ENCODE measurements at regions of chr14 and their contacts with region 1.

Region 1: GRCh38 chr14:52824507-52824906 is 33.1 kb upstream of the GNPNAT1 start:
- DNase-seq: no peak
- ATAC-seq: no peak
- H3K4me3 ChIP-seq: no peak overlapping the region
- H3K4me3 Mint-ChIP-seq: no peak overlapping the region
- H3K27ac ChIP-seq: no peak overlapping the region
- H3K27ac Mint-ChIP-seq: no peak overlapping the region
- H3K4me1 ChIP-seq: no peaks in the 10 kb centered on the region
- H3K4me1 Mint-ChIP-seq: peaks cover 0 to 6% (median 0%) of the 10 kb centered on the region in 7 donors
- H3K27me3 ChIP-seq: no peaks in the 10 kb centered on the region
- H3K27me3 Mint-ChIP-seq: peaks cover 0 to 13% (median 3%) of the 10 kb centered on the region in 5 donors

Region 2: DNA sequence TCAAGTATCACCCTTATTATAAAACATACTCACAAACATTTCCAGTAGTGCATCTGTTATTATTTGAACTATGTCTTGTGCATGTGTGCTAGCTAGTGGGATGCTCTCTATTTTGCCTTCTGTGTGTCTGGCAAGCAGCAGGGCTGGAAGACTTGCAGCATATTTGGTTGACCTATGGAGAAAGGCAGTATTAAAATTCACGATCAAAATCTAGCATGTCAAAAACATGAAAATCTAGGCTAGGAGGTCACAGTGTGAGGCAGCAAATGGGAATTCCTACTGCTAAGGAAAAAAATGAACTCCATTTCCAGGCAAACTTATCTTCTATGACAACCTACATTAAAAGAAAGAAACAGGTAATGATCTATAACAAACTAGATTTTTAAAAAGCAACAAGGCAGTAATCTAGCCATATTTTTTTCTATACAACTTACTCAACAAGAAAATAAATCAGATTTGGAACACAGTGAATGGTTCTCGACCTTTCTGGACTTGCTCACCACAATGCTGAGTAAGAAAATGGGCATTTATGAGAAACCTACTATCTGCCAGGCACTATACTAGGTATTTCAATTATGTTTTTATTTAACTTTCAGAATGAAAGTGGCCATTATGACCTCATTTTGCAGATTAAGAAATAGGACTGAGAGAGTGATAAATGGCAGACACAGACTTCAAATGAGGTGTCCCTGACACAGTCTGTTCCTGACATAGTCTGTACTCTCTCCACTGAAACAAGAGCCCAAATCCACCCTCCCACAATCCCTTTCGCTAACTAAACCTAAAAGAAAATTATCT is 369.0 kb before region 1 on chr14:
- CTCF ChIA-PET with region 1: no interaction called
- POLR2A ChIA-PET with region 1: no interaction called
- intact Hi-C with region 1: no loop called
- DNase-seq: no peak
- ATAC-seq: no peak
- H3K4me3 ChIP-seq: no peak overlapping the region
- H3K4me3 Mint-ChIP-seq: no peak overlapping the region
- H3K27ac ChIP-seq: no peak overlapping the region
- H3K27ac Mint-ChIP-seq: peak overlapping the region in 1 of 9 donors; percentile 86
- H3K4me1 ChIP-seq: no peaks in the 10 kb centered on the region
- H3K4me1 Mint-ChIP-seq: peaks cover 0 to 15% (median 0%) of the 10 kb centered on the region in 7 donors
- H3K27me3 ChIP-seq: no peaks in the 10 kb centered on the region
- H3K27me3 Mint-ChIP-seq: no peaks in the 10 kb centered on the region

Region 3: DNA sequence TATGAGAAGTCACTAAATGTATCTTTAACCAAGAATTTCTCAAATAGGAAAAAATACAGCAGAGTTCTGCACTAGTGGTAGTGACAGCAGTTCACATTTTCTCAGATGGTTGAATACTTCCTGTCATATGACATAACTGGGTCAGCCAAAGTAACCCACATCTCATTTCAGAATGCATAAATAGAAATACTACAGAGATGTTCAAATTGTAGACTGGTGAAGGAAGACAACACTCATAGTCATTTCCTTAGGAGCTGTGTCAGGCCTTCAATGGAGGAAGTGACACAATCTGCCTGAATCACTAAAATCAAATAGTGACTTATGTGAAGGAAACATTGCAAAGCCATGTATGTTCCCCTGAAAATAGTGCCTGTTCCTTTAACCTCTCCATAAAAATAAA is 94.0 kb after region 1 on chr14:
- CTCF ChIA-PET with region 1: interaction called, 3 read pairs
- POLR2A ChIA-PET with region 1: no interaction called
- intact Hi-C with region 1: loop called in 1 of 2 experiments (anchors 1 kb)
- DNase-seq: peak in 7 of 9 donors; percentile 55 to 81 (median 75)
- ATAC-seq: peak; percentile 99
- H3K4me3 ChIP-seq: no peak overlapping the region
- H3K4me3 Mint-ChIP-seq: peak overlapping the region in 3 of 10 donors; percentile 1 to 26 (median 22)
- H3K27ac ChIP-seq: peak overlapping the region; percentile 55
- H3K27ac Mint-ChIP-seq: peak overlapping the region; percentile 65 to 93 (median 81)
- H3K4me1 ChIP-seq: peaks cover 18 to 20% of the 10 kb centered on the region in 2 donors
- H3K4me1 Mint-ChIP-seq: peaks cover 15 to 37% (median 30%) of the 10 kb centered on the region in 7 donors
- H3K27me3 ChIP-seq: no peaks in the 10 kb centered on the region
- H3K27me3 Mint-ChIP-seq: peaks cover 0 to 2% (median 0%) of the 10 kb centered on the region in 5 donors

Region 4: DNA sequence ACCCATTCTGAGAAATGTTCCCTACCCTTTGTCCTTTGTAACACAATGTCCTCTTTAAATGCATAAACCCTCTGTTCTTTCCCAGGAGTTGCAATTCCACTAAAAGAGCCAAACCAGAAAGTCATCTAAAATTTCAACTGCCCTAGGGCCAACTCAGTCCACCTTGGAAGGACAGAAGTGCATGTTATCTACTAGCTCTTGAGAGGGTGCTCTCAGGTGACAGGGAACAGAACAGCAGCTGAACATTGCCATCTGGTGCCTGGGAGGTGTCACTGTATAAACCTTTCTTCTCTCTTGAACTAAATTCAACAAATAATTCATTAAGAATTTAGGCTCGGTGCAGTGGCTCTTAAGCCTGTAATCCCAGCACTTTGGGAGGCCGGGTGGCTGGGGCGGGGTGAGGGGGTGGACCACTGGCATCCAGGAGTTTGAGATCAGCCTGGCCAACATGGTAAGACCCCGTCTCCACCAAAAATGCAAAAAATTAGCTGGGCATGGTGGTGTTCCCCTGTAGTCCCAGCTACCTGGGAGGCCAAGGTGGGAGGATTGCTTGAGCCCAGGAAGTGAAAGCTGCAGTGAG is 136.6 kb after region 1 on chr14:
- CTCF ChIA-PET with region 1: interaction called, 46 read pairs
- POLR2A ChIA-PET with region 1: no interaction called
- intact Hi-C with region 1: loop called (anchors 1 kb)
- DNase-seq: peak in 7 of 9 donors; percentile 35 to 63 (median 50)
- ATAC-seq: peak; percentile 84
- H3K4me3 ChIP-seq: no peak overlapping the region
- H3K4me3 Mint-ChIP-seq: no peak overlapping the region
- H3K27ac ChIP-seq: no peak overlapping the region
- H3K27ac Mint-ChIP-seq: peak overlapping the region in 1 of 9 donors; percentile 62
- H3K4me1 ChIP-seq: peaks cover 0 to 3% of the 10 kb centered on the region in 2 donors
- H3K4me1 Mint-ChIP-seq: peaks cover 0 to 7% (median 4%) of the 10 kb centered on the region in 7 donors
- H3K27me3 ChIP-seq: no peaks in the 10 kb centered on the region
- H3K27me3 Mint-ChIP-seq: peaks cover 0 to 5% (median 0%) of the 10 kb centered on the region in 5 donors

Region 5: GRCh38 chr14:53055003-53055402 is 230.5 kb after region 1 on chr14:
- CTCF ChIA-PET with region 1: no interaction called
- POLR2A ChIA-PET with region 1: no interaction called
- intact Hi-C with region 1: loop called (anchors 1 kb)
- DNase-seq: peak in 7 of 9 donors; percentile 8 to 47 (median 30)
- ATAC-seq: peak; percentile 76
- H3K4me3 ChIP-seq: no peak overlapping the region
- H3K4me3 Mint-ChIP-seq: no peak overlapping the region
- H3K27ac ChIP-seq: no peak overlapping the region
- H3K27ac Mint-ChIP-seq: peak overlapping the region in 3 of 9 donors; percentile 11 to 40 (median 19)
- H3K4me1 ChIP-seq: no peaks in the 10 kb centered on the region
- H3K4me1 Mint-ChIP-seq: peaks cover 0 to 11% (median 4%) of the 10 kb centered on the region in 7 donors
- H3K27me3 ChIP-seq: no peaks in the 10 kb centered on the region
- H3K27me3 Mint-ChIP-seq: no peaks in the 10 kb centered on the region

Region 6: GRCh38 chr14:53295985-53296582 is 471.6 kb after region 1 on chr14:
- CTCF ChIA-PET with region 1: no interaction called
- POLR2A ChIA-PET with region 1: no interaction called
- intact Hi-C with region 1: loop called in 1 of 2 experiments (anchors 2 kb)
- DNase-seq: peak in 6 of 9 donors; percentile 4 to 52 (median 44)
- ATAC-seq: no peak
- H3K4me3 ChIP-seq: no peak overlapping the region
- H3K4me3 Mint-ChIP-seq: no peak overlapping the region
- H3K27ac ChIP-seq: no peak overlapping the region
- H3K27ac Mint-ChIP-seq: no peak overlapping the region
- H3K4me1 ChIP-seq: no peaks in the 10 kb centered on the region
- H3K4me1 Mint-ChIP-seq: peaks cover 0 to 2% (median 0%) of the 10 kb centered on the region in 7 donors
- H3K27me3 ChIP-seq: no peaks in the 10 kb centered on the region
- H3K27me3 Mint-ChIP-seq: peaks cover 0 to 3% (median 0%) of the 10 kb centered on the region in 5 donors

Region 7: DNA sequence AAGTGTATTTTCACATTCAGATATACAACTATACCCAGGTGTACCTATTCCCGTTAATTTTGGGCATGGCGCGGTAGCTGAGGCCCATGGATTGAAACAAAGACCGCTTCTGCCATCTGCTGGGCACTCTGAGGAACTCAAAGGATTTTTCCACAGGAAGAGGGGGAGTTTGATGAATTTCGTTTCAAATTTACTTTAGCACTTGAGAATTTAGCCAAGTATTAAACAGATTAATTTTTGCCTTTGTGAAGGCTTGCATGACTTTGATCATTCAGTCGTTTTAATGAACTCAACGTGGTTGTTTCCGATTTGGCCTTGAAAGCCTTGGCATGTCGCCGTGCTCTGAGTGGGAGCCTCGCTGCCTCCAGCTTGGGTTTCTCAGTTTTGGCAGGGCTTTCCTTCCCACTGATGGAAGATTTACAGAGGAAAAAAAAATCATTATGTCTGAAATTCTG is 481.8 kb after region 1 on chr14:
- CTCF ChIA-PET with region 1: interaction called, 3 read pairs
- POLR2A ChIA-PET with region 1: no interaction called
- intact Hi-C with region 1: loop called in 1 of 2 experiments (anchors 1 kb)
- DNase-seq: peak in 7 of 9 donors; percentile 2 to 44 (median 34)
- ATAC-seq: peak; percentile 55
- H3K4me3 ChIP-seq: peak overlapping the region; percentile 46
- H3K4me3 Mint-ChIP-seq: peak overlapping the region; percentile 52 to 83 (median 70)
- H3K27ac ChIP-seq: no peak overlapping the region
- H3K27ac Mint-ChIP-seq: peak overlapping the region in 1 of 9 donors; percentile 13
- H3K4me1 ChIP-seq: peaks cover 0 to 3% of the 10 kb centered on the region in 2 donors
- H3K4me1 Mint-ChIP-seq: peaks cover 0 to 16% (median 6%) of the 10 kb centered on the region in 7 donors
- H3K27me3 ChIP-seq: no peaks in the 10 kb centered on the region
- H3K27me3 Mint-ChIP-seq: peaks cover 0 to 16% (median 0%) of the 10 kb centered on the region in 5 donors

Region 8: GRCh38 chr14:54175298-54175942 is 1350.9 kb after region 1 on chr14:
- CTCF ChIA-PET with region 1: no interaction called
- POLR2A ChIA-PET with region 1: no interaction called
- intact Hi-C with region 1: loop called in 1 of 2 experiments (anchors 10 kb)
- DNase-seq: peak in 6 of 9 donors; percentile 6 to 34 (median 17)
- ATAC-seq: peak; percentile 45
- H3K4me3 ChIP-seq: no peak overlapping the region
- H3K4me3 Mint-ChIP-seq: no peak overlapping the region
- H3K27ac ChIP-seq: no peak overlapping the region
- H3K27ac Mint-ChIP-seq: no peak overlapping the region
- H3K4me1 ChIP-seq: no peaks in the 10 kb centered on the region
- H3K4me1 Mint-ChIP-seq: no peaks in the 10 kb centered on the region
- H3K27me3 ChIP-seq: no peaks in the 10 kb centered on the region
- H3K27me3 Mint-ChIP-seq: peaks cover 29 to 69% (median 60%) of the 10 kb centered on the region in 5 donors

Measured in naive thymus-derived CD4-positive, alpha-beta T cell (primary cell).